BJ (cell line): ENCODE measurements at regions of chr14 and their contacts with region 1.

Region 1: DNA sequence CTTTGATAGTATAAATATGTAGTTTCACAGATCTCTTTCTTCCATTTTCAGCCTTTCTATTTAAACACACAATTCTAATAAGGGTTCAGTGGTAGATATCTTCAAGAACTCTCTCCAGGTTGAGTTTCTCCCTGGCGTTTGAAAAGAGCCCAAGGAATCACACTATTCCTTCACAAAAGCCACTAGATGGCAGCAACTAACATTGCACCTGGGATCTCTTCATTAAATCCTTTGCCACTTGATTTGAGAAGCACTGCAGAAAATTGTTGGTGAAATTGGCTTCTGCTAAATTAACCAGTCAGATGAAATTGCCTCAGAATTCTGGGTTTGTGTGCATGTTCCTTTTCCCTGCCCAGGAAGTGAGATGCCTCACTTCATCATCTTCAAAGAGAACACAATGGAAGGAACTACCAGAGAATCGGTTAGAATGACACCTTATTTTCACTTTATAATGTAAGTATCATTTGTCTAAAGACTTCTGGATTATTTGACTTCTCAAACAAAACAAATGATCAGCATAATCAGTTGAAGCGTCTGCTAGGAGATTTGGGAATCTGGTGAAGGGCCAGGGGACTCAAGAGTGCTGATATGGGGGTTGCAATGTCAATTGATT is 6.8 kb downstream of the CCDC198 start:
- DNase-seq: no peak
- H3K4me3 ChIP-seq: no peak overlapping the region
- H3K27me3 ChIP-seq: peaks cover 2% of the 10 kb centered on the region; the same call in 1 of the 2 replicates
- CTCF ChIP-seq: peak; percentile 66

Region 2: DNA sequence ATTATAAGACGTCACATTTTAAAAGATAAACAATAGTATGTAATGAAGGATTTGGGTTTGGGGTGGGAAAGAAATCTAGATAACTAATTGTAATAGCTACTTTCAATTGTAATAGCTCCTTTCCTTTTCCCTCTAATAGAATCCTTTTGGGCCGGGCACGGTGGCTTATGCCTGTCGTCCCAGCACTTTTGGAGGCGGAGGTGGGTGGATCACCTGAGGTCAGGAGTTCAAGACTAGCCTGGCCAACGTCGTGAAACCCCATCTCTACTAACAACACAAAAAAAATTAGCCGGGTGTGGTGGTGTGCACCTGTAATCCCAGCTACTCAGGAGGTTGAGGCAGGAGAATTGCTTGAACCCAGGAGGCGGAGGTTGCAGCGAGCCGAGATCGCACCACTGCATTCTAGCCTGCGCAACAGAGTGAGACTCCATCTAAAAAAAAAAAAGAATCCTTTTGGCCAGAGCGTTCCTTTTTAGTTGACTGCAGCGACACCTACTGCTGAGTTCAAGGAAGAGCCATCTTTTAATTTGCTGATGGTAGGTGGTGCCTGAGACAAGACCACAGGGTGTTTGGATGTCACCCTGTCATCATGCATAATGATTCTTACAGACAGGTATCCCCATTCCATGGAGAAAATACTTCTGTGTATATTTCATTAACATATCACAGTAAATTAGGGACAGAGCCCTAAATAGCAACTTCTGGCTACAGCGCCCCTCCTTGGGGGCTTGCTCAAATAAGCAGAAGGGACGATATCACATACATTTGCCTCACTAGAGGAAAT is 585.6 kb after region 1 on chr14:
- CTCF ChIA-PET with region 1: interaction called, 13 read pairs
- POLR2A ChIA-PET with region 1: no interaction called
- DNase-seq: no peak
- H3K4me3 ChIP-seq: no peak overlapping the region
- H3K27me3 ChIP-seq: peaks cover 2% of the 10 kb centered on the region; the same call in 1 of the 2 replicates
- CTCF ChIP-seq: peak; percentile 70